IMR-90 (cell line): ENCODE measurements at regions of chr3 and their contacts with region 1.

Region 1: GRCh38 chr3:141231101-141231935 is at the start of gene PXYLP1:
- DNase-seq: peak; percentile 85
- ATAC-seq: peak; percentile 98
- H3K4me3 ChIP-seq: peak within 1 kb of the TSS; percentile 71
- H3K27ac ChIP-seq: peak within 1 kb of the TSS; percentile 61
- H3K4me1 ChIP-seq: peaks cover 5% of the 10 kb centered on the region; the same call in 1 of the 2 replicates
- H3K27me3 ChIP-seq: peaks cover 3% of the 10 kb centered on the region; the same call in 1 of the 2 replicates
- CTCF ChIP-seq: peak; percentile 95
- POLR2A ChIP-seq: peak; percentile 82
- RAD21 ChIP-seq: peak; percentile 70
- total RNA-seq, gene PXYLP1: 13.3 and 15.6 TPM in 2 replicates

Region 2: DNA sequence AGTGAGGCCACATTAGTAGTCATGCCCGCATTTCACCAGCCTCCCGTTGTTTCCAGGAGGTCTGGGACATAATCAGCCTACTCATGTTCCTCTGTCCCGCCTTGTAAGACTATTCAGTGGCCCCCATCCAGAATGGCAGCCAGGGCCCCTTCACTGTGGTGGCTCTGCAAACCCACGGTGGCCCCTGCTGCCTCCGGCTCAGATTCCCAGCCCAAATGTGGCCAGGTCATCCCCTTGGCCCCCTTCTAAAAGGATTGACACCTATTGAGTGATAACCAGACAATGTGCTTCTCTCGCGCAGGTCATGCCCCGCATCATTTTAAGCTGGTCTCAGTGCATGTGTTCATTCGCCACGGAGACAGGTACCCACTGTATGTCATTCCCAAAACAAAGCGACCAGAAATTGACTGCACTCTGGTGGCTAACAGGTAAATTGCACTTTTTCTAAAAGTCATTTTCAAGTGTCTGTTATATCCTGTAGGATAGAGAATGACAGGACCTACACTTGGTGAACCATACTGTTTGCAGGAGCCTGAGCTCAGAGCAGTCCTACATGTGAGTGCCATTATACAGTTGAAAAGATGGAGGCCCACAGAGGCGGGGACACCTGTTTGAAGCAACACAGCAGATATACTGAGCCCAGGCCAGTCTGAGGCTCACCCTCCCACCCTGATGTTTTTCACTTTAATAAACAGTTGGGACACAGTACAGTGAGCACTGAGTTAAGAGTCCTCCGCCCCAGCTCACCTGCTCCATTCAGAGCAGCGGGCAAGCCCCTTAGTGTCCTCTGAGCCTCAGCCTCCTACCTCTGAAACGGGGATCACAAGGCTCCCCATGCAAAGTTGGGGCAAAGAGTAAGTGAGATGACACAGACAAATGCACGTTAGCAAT is 48.0 kb after region 1 on chr3:
- CTCF ChIA-PET with region 1: interaction called, 15 read pairs
- POLR2A ChIA-PET with region 1: no interaction called
- dilution Hi-C with region 1: no loop called
- in situ Hi-C with region 1: no loop called
- intact Hi-C with region 1: loop called (anchors 1 kb)
- DNase-seq: peak; percentile 50
- ATAC-seq: peak; percentile 50
- H3K4me3 ChIP-seq: no peak overlapping the region
- H3K27ac ChIP-seq: no peak overlapping the region
- H3K4me1 ChIP-seq: peaks cover 12% of the 10 kb centered on the region
- H3K27me3 ChIP-seq: no peaks in the 10 kb centered on the region
- CTCF ChIP-seq: peak; percentile 49
- POLR2A ChIP-seq: no peak
- RAD21 ChIP-seq: peak; percentile 51